Activated CD4-positive, alpha-beta memory T cell treated with anti-CD3 and anti-CD28 coated beads for 36 hours (primary cell): ENCODE measurements at regions of chr22 and their contacts with region 1.

Region 1: GRCh38 chr22:17830043-17830961 is 56.0 kb upstream of the BID start:
- DNase-seq: peak; percentile 88
- H3K4me3 Mint-ChIP-seq: no peak overlapping the region
- H3K27ac Mint-ChIP-seq: no peak overlapping the region
- H3K4me1 Mint-ChIP-seq: no peaks in the 10 kb centered on the region
- H3K27me3 Mint-ChIP-seq: no peaks in the 10 kb centered on the region

Region 2: GRCh38 chr22:17862646-17863181 is 32.4 kb after region 1 on chr22:
- CTCF ChIA-PET with region 1: interaction called, 10 read pairs
- POLR2A ChIA-PET with region 1: no interaction called
- intact Hi-C with region 1: no loop called
- DNase-seq: no peak
- H3K4me3 Mint-ChIP-seq: no peak overlapping the region
- H3K27ac Mint-ChIP-seq: no peak overlapping the region
- H3K4me1 Mint-ChIP-seq: no peaks in the 10 kb centered on the region
- H3K27me3 Mint-ChIP-seq: no peaks in the 10 kb centered on the region

Region 3: GRCh38 chr22:17891481-17892167 is 61.3 kb after region 1 on chr22:
- CTCF ChIA-PET with region 1: interaction called, 11 read pairs
- POLR2A ChIA-PET with region 1: no interaction called
- intact Hi-C with region 1: no loop called
- DNase-seq: peak; percentile 17
- H3K4me3 Mint-ChIP-seq: no peak overlapping the region
- H3K27ac Mint-ChIP-seq: no peak overlapping the region
- H3K4me1 Mint-ChIP-seq: no peaks in the 10 kb centered on the region
- H3K27me3 Mint-ChIP-seq: no peaks in the 10 kb centered on the region

Region 4: GRCh38 chr22:18031695-18032454 is 201.6 kb after region 1 on chr22:
- CTCF ChIA-PET with region 1: interaction called, 37 read pairs
- POLR2A ChIA-PET with region 1: no interaction called
- intact Hi-C with region 1: no loop called
- DNase-seq: no peak
- H3K4me3 Mint-ChIP-seq: no peak overlapping the region
- H3K27ac Mint-ChIP-seq: no peak overlapping the region
- H3K4me1 Mint-ChIP-seq: no peaks in the 10 kb centered on the region
- H3K27me3 Mint-ChIP-seq: peaks cover 1% of the 10 kb centered on the region